Lower leg skin (tissue), 4 donors: ENCODE measurements at regions of chr17 and their contacts with region 1.

Region 1: GRCh38 chr17:38729886-38730525 is at the start of gene CISD3:
- DNase-seq: peak; percentile 62 to 95
- H3K4me3 ChIP-seq: peak within 1 kb of the TSS; percentile 54
- CTCF ChIP-seq: peak in 1 of 3 donors; percentile 30
- POLR2A ChIP-seq: no peak
- total RNA-seq, gene CISD3: 3.7 to 7.8 (median 5.4) TPM

Region 2: GRCh38 chr17:38539386-38539785 is 190.6 kb before region 1 on chr17:
- intact Hi-C with region 1: no loop called
- DNase-seq: no peak
- H3K4me3 ChIP-seq: no peak overlapping the region
- CTCF ChIP-seq: no peak
- POLR2A ChIP-seq: no peak

Region 3: DNA sequence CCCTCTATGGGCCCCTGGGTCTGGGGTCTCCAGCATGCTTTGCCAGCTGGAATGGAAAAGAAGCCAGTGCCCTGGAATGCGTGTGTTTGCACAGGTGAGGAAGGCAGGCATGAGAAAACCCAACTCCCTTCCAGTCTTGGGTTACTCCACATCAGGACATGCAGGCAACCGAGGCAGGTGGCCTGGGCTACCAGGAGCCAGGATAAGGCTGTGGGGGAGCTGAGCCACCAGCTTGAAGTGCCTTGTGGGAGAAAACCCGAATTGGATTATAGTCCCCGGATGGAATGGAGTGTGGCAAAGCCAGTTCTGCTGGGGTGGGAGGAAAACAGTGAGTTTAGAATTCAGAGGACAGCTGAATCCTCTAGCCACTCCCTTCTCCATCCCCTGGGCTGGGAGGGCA is 131.5 kb before region 1 on chr17:
- intact Hi-C with region 1: no loop called
- DNase-seq: no peak
- H3K4me3 ChIP-seq: no peak overlapping the region
- CTCF ChIP-seq: no peak
- POLR2A ChIP-seq: no peak

Region 4: DNA sequence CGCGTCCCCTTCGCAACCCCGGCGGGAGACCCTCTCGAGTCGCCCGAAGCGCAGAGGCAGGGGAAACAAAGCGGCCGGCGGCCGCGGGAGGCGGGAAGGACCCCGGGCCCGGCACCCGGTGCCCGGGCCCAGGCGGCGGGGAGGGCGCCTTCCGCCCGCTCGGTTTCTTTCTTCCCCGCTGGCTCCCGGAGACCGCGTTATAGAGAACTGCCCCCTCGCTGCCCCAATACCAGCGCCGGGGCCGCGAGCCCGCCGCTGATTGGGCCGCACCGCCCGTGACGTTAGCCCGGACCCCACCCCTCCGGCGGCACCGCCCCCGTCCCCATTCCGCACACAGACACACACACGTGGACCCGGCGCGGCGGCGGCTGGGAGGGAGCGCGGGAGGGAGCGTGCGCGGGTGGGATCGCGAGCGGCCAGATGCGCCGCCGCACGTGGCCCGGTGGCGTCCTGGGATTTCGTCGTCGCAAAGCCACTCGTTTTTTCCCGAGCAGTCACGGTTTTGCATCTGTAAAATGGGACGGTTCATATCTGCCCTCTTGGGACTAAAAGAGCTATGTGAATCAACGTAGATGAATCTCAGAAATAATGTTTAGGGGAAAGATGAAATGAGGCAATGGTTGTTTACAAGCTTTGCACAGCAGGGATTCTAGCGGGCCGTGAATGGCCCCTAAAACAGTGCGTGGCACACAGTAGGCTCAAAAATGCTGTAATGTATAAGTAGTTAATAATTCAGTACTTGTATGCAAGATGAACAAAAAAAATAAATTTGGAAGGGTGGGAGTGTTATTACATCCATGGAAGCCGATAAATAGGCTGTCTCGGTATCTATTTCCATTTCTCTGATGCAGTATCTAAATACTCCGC is 55.0 kb before region 1 on chr17 and contains the start of gene EPOP:
- intact Hi-C with region 1: loop called (anchors 2 kb)
- DNase-seq: peak; percentile 72 to 96
- H3K4me3 ChIP-seq: peak within 1 kb of the TSS; percentile 51
- CTCF ChIP-seq: no peak
- POLR2A ChIP-seq: no peak
- total RNA-seq, gene EPOP: 1.8 to 8.7 (median 3.3) TPM

Region 5: GRCh38 chr17:40548982-40549685 is 1819.1 kb after region 1 on chr17:
- intact Hi-C with region 1: loop called (anchors 5 kb)
- DNase-seq: peak; percentile 41 to 90
- H3K4me3 ChIP-seq: no peak overlapping the region
- CTCF ChIP-seq: no peak
- POLR2A ChIP-seq: no peak